ENCODE measurements at regions of chr4 and their contacts with region 1.

Region 1: GRCh38 chr4:158722917-158723793 is at the start of gene PPID:
- DNase-seq: peak; percentile 68 to 81
- ATAC-seq: peak; percentile 92 to 95
- H3K4me3 ChIP-seq: peak within 1 kb of the TSS; percentile 72 to 95 (median 94)
- H3K27ac ChIP-seq: peak within 1 kb of the TSS; percentile 90 to 96 (median 92)
- H3K4me1 ChIP-seq: peaks cover 17 to 30% of the 10 kb centered on the region in 2 donors
- H3K27me3 ChIP-seq: no peaks in the 10 kb centered on the region
- CTCF ChIP-seq: no peak
- POLR2A ChIP-seq: peak; percentile 87
- total RNA-seq, gene PPID: 30.1 to 81.8 (median 40.6) TPM

Region 2: DNA sequence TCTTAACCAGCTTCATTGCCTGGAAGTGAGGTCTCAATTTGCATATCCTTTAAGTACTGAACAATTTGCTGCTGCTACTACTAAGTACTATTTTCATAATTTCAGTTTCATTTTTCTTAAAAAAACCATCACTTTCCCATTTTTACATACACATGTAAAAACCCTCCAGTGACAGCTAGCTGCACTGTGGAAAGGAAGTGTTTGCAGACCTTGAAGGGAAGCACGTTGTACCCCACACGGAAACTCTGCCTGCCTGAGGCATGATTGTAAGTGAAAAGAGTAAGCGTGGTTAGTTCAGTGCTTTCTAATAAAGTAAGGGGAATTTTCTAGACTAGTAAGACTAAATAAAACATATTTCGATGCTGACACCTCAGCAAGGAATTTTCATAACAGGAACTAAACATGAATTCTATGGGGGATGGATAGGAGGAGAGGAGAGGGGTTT is 483.3 kb after region 1 on chr4:
- in situ Hi-C with region 1: loop called in 1 of 4 experiments (anchors 10 kb)
- intact Hi-C with region 1: loop called (anchors 2 kb)
- DNase-seq: no peak
- ATAC-seq: no peak
- H3K4me3 ChIP-seq: no peak overlapping the region
- H3K27ac ChIP-seq: peak overlapping the region in 1 of 4 donors; percentile 19
- H3K4me1 ChIP-seq: peaks cover 15 to 46% of the 10 kb centered on the region in 2 donors
- H3K27me3 ChIP-seq: no peaks in the 10 kb centered on the region
- CTCF ChIP-seq: no peak
- POLR2A ChIP-seq: no peak